GM13977 (cell line): ENCODE measurements at regions of chr9 and their contacts with region 1.

Region 1: DNA sequence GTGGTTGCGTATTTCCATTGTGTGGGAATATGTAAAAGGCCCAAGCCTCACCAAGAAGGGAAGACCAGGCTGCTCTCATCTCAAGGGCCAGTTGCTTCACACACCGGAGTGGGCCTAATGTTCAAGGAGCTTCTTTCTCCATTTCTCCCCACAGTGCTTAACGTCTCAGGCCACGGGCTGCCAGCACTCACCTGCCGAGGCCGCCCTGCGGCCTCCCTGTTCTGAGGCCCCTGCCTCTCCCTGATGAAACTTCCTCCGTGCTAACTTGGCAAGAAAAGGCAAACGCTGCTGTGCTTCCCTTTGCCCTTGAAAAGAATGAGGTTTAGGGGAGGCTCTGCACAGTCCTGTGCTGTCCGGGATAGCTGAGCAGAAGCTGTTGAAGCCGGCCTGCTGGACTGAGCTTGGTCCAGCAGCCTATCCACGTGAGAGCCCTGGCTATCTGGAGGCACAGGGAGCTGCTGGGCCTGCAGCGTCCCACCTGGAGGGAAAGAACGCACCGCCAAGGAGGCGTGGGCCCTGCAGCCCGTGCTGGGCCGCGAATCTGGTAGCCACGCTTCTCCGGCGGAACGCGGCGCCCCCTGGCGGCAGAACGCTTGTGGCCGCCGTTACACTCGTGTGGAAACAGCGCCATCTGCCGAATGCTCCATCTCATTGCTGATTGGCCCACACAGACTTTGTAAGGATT is 73.5 kb upstream of the PRSS3 start:
- DNase-seq: peak; percentile 79
- CTCF ChIP-seq: peak; percentile 100

Region 2: DNA sequence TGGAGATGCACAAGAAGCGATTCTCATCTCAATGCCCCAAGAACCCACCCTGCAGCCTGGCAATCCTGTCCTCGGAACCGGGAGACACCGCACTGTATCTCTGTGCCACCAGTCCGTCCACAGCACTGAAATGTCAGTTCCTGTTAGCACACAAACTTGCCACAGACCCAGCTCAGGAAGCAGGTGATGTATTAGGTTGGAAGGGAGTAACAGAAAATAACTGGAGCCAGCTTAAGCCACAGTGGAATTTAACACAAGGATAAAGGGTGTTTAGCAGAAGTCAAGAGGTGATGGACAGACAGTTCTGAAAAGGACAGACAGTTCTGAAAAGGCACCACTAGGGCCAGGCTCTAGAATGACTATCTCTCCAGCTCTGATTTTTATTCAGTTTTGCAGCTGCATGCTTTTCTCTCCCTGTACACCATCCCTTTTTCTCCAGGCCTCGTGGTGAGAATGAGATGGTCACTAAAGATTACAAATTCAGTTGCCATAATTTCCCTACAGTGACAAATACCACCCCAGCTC is 83.4 kb before region 1 on chr9:
- in situ Hi-C with region 1: loop called (anchors 10 kb)
- DNase-seq: no peak
- CTCF ChIP-seq: no peak

Region 3: GRCh38 chr9:34384368-34385165 is 662.8 kb after region 1 on chr9:
- in situ Hi-C with region 1: no loop called
- DNase-seq: no peak
- CTCF ChIP-seq: no peak

Region 4: DNA sequence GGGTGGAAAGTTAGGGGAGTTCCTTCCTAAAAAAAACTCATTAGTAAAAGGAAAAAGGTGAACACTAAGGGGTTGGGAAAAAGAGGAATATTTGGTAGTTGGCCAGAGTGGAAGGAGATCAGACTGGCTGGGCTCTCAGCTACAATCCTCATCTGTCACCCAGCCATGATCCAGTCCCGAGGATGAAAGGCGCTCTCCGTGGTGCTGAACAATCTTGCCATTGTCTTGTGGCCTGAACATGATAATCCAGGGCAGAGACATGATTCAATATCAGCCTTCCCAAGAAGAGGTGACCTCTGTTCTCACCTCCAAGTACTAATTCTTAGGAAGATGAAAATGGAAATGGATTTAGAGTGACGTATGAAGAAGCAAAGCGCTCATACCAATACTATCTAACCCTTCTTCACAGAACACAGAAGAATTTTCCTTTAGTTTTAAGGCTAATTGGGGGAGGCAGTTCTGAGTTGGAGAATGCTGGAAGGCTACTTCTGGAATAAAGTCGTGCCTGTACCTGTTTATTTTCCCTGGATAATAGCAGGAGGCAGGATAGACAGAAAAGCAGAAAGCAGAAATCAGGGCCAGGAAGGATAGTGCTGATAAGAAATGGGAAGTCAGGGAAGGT is 691.5 kb after region 1 on chr9:
- in situ Hi-C with region 1: no loop called
- DNase-seq: no peak
- CTCF ChIP-seq: no peak